Dorsolateral prefrontal cortex (tissue), 120 donors: ENCODE measurements at regions of chr10 and their contacts with region 1.

Region 1: DNA sequence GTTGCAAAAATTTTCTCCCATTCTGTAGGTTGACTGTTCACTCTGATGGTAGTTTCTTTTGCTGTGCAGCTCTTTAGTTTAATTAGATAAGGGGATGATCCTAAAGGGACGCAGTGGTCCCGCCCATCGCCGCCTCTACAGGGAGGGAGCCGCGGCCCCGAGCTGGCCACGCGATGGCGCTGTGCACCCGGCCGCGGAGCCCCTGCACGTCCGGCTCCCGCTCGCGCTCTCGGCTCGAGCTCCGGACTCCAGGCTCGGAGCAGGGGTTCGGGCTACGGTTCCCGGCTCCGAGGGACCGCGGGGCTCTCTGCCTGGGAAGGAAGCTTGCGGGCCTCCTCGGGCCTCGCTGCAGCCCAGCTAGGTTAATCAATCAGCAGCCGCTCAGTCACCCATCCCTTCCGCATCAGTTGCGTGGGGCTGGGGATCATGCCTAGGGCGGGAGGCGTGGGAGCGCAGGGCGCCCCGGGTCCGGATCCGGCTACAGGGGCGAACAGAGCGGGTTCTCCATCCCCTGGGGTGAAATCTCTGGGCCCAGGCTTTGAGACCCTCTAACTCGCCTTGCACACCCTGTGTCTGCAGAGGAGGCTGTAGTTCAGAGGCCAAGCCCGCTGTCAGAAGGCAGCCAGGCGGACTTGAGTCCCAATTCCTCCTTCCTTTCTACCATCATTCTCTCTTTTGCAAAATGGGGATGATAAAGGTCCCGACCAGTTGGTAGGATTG is 97.9 kb downstream of the WDR11 start:
- DNase-seq: peak; percentile 26 to 88 (median 67)
- H3K4me3 ChIP-seq: peak overlapping the region; percentile 19 to 80 (median 59)
- H3K27ac ChIP-seq: peak overlapping the region in 41 of 59 donors; percentile 4 to 88 (median 61)
- H3K27me3 ChIP-seq: peaks cover 0 to 4% (median 0%) of the 10 kb centered on the region in 45 donors
- CTCF ChIP-seq: peak; percentile 77 to 98 (median 94)

Region 2: DNA sequence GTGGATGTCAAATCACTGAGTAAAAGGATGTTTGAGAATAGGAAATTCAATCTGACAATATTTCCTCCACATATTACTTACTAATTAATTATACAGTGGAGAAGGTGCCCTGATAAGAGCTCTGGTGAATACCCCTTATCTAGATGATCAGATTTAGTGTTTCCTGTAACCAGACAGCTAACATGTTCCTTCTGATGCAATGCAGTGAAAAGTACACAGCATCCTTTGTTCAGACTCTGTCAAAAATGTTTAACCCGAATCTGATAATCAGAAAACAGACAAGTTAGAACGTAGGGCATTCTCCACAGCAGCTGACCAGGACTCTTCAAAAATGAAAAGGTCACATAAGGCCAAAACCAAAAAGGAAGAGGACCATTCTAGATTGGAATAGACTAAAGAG is 51.7 kb before region 1 on chr10:
- intact Hi-C with region 1: no loop called
- DNase-seq: no peak
- H3K4me3 ChIP-seq: no peak overlapping the region
- H3K27ac ChIP-seq: no peak overlapping the region
- H3K27me3 ChIP-seq: no peaks in the 10 kb centered on the region
- CTCF ChIP-seq: no peak

Region 3: DNA sequence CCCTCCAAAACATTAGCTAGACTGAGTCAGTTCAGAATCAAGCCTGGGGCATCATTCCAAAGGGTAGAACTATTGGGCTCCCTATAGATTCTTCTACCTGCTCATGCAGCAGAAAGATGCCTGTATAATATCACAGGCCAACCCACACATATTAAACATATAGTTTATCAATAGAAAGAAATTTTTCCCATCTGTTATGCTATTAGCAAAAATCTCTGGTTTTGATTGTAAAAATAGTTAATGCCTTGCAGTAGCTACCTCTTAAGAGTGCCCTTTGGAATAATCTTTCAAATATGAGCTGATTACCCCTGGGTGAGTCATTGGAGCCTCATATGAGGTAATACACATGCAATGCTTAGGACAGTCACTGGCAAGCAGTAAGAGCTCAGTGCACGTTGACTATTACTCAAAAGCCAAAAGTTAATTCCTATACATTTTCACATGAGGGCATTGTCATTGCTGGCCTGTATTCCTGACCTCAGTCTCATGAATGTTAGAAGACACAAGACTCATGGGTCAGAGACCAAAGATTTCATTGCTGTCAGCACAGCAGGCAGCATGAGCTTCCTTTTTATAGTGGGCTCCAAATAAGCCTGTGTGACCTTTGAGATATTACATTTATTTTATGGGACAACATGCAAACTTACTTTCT is 469.2 kb after region 1 on chr10:
- intact Hi-C with region 1: loop called in 1 of 2 experiments (anchors 10 kb)
- DNase-seq: no peak
- H3K4me3 ChIP-seq: no peak overlapping the region
- H3K27ac ChIP-seq: no peak overlapping the region
- H3K27me3 ChIP-seq: no peaks in the 10 kb centered on the region
- CTCF ChIP-seq: no peak

Region 4: GRCh38 chr10:121497513-121498470 is 548.7 kb after region 1 on chr10:
- intact Hi-C with region 1: no loop called
- DNase-seq: no peak
- H3K4me3 ChIP-seq: no peak overlapping the region
- H3K27ac ChIP-seq: peak overlapping the region in 54 of 59 donors; percentile 1 to 99 (median 62)
- H3K27me3 ChIP-seq: no peaks in the 10 kb centered on the region
- CTCF ChIP-seq: peak in 5 of 56 donors; percentile 8 to 29 (median 9)

Region 5: GRCh38 chr10:121536310-121536913 is 587.4 kb after region 1 on chr10:
- intact Hi-C with region 1: loop called (anchors 5 kb)
- DNase-seq: peak in 5 of 10 donors; percentile 58 to 86 (median 61)
- H3K4me3 ChIP-seq: peak overlapping the region in 1 of 59 donors; percentile 10
- H3K27ac ChIP-seq: peak overlapping the region; percentile 65 to 100 (median 96)
- H3K27me3 ChIP-seq: no peaks in the 10 kb centered on the region
- CTCF ChIP-seq: peak in 4 of 56 donors; percentile 9 to 23 (median 12)